ENCODE measurements at regions of chr2 and their contacts with region 1.

Region 1: GRCh38 chr2:168518555-168519066 is 62.5 kb downstream of the CERS6 start:
- DNase-seq: peak; percentile 84
- H3K4me3 Mint-ChIP-seq: peak overlapping the region; percentile 27
- H3K27ac Mint-ChIP-seq: peak overlapping the region; percentile 60
- H3K4me1 Mint-ChIP-seq: peaks cover 51% of the 10 kb centered on the region
- H3K27me3 Mint-ChIP-seq: no peaks in the 10 kb centered on the region
- CTCF ChIP-seq: no peak

Region 2: DNA sequence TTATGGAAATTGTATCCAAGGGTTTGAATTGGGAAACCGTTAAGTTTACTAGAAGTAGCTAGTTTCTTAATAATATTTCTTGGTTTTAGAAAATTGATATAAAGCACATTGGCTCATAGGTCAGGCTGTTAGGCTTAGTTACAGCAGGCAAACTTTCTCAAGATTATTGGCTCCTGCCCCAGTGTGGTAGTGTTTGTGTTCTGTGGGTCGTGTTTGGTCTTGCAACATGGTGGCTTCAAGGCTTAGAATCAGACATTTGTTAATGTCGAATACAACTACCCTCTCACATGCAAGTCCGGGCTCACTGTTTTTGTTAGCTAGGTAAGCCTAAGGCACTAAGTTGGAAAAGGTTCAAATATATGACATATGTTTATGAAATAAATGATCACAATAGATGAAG is 43.0 kb before region 1 on chr2:
- CTCF ChIA-PET with region 1: no interaction called
- POLR2A ChIA-PET with region 1: interaction called, 18 read pairs
- intact Hi-C with region 1: no loop called
- DNase-seq: peak; percentile 82
- H3K4me3 Mint-ChIP-seq: peak overlapping the region; percentile 39
- H3K27ac Mint-ChIP-seq: peak overlapping the region; percentile 40
- H3K4me1 Mint-ChIP-seq: peaks cover 24% of the 10 kb centered on the region
- H3K27me3 Mint-ChIP-seq: no peaks in the 10 kb centered on the region
- CTCF ChIP-seq: no peak

Region 3: DNA sequence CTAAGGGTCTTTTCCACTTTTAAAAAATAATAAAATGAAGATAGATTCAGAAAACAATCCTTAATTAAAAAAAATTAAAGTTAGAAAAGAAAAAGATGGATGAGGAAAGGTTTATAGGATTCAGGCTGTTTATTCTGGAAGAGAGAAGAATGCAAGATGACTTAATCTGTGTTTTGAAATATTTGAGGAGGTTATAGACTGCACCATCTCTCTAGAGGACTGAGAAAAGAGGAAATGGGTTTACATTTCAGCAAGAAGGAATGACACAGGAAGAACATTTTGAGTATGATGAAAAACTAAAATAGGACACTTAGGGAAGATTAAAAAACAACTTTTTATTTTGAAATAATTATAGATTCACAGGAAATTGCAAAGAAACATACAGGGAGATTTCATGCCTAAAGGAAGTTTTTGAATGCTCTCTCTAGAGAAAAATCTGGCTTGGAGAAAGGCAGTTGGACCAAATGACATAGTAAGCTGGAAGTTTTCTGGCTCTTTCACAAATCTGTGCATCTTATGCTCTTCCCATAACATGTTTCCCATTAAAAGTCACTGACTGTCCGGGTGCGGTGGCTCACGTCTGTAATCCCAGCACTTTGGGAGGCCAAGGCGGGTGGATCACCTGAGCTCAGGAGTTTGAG is 12.5 kb after region 1 on chr2:
- CTCF ChIA-PET with region 1: interaction called, 3 read pairs
- POLR2A ChIA-PET with region 1: interaction called, 13 read pairs
- intact Hi-C with region 1: no loop called
- DNase-seq: no peak
- H3K4me3 Mint-ChIP-seq: no peak overlapping the region
- H3K27ac Mint-ChIP-seq: peak overlapping the region; percentile 29
- H3K4me1 Mint-ChIP-seq: peaks cover 56% of the 10 kb centered on the region
- H3K27me3 Mint-ChIP-seq: no peaks in the 10 kb centered on the region
- CTCF ChIP-seq: no peak

Region 4: GRCh38 chr2:168545439-168546082 is 26.9 kb after region 1 on chr2:
- CTCF ChIA-PET with region 1: interaction called, 4 read pairs
- POLR2A ChIA-PET with region 1: interaction called, 14 read pairs
- intact Hi-C with region 1: no loop called
- DNase-seq: peak; percentile 84
- H3K4me3 Mint-ChIP-seq: peak overlapping the region; percentile 19
- H3K27ac Mint-ChIP-seq: peak overlapping the region; percentile 92
- H3K4me1 Mint-ChIP-seq: peaks cover 38% of the 10 kb centered on the region
- H3K27me3 Mint-ChIP-seq: no peaks in the 10 kb centered on the region
- CTCF ChIP-seq: no peak

Region 5: GRCh38 chr2:168565112-168565511 is 46.5 kb after region 1 on chr2:
- CTCF ChIA-PET with region 1: no interaction called
- POLR2A ChIA-PET with region 1: interaction called, 16 read pairs
- intact Hi-C with region 1: no loop called
- DNase-seq: peak; percentile 94
- H3K4me3 Mint-ChIP-seq: peak overlapping the region; percentile 28
- H3K27ac Mint-ChIP-seq: peak overlapping the region; percentile 87
- H3K4me1 Mint-ChIP-seq: peaks cover 32% of the 10 kb centered on the region
- H3K27me3 Mint-ChIP-seq: no peaks in the 10 kb centered on the region
- CTCF ChIP-seq: no peak

Region 6: GRCh38 chr2:168583064-168583709 is 64.6 kb after region 1 on chr2:
- CTCF ChIA-PET with region 1: no interaction called
- POLR2A ChIA-PET with region 1: interaction called, 7 read pairs
- intact Hi-C with region 1: loop called (anchors 5 kb)
- DNase-seq: peak; percentile 22
- H3K4me3 Mint-ChIP-seq: peak overlapping the region; percentile 17
- H3K27ac Mint-ChIP-seq: peak overlapping the region; percentile 92
- H3K4me1 Mint-ChIP-seq: peaks cover 38% of the 10 kb centered on the region
- H3K27me3 Mint-ChIP-seq: no peaks in the 10 kb centered on the region
- CTCF ChIP-seq: no peak

Region 7: DNA sequence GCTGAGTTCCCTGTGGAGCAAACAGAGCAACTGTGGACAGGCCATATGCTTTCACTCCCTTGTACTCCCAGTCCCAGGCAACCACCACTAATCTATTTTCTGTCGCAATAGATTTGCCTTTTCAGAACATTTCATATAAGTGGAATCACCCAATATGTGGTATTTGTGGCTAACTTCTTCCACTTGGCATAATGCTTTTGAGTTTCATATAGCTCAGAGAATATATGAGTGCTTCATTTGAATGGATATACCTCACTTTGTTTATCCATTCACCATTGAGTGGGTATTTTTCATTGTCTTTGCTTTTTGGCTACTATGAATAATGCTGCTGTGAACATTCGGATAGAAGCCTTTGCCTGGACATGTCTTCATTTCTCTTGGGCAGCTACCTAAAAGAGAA is 89.4 kb after region 1 on chr2:
- CTCF ChIA-PET with region 1: no interaction called
- POLR2A ChIA-PET with region 1: interaction called, 12 read pairs
- intact Hi-C with region 1: no loop called
- DNase-seq: peak; percentile 44
- H3K4me3 Mint-ChIP-seq: no peak overlapping the region
- H3K27ac Mint-ChIP-seq: peak overlapping the region; percentile 86
- H3K4me1 Mint-ChIP-seq: peaks cover 33% of the 10 kb centered on the region
- H3K27me3 Mint-ChIP-seq: no peaks in the 10 kb centered on the region
- CTCF ChIP-seq: no peak